PC-9 (cell line): ENCODE measurements at regions of chr1 and their contacts with region 1.

Region 1: GRCh38 chr1:6235296-6235677 is 477 bp downstream of the ICMT start:
- DNase-seq: no peak
- H3K4me3 ChIP-seq: peak overlapping the region; percentile 59
- H3K27ac ChIP-seq: no peak overlapping the region
- H3K4me1 ChIP-seq: peaks cover 8% of the 10 kb centered on the region
- H3K27me3 ChIP-seq: no peaks in the 10 kb centered on the region
- CTCF ChIP-seq: no peak

Region 2: DNA sequence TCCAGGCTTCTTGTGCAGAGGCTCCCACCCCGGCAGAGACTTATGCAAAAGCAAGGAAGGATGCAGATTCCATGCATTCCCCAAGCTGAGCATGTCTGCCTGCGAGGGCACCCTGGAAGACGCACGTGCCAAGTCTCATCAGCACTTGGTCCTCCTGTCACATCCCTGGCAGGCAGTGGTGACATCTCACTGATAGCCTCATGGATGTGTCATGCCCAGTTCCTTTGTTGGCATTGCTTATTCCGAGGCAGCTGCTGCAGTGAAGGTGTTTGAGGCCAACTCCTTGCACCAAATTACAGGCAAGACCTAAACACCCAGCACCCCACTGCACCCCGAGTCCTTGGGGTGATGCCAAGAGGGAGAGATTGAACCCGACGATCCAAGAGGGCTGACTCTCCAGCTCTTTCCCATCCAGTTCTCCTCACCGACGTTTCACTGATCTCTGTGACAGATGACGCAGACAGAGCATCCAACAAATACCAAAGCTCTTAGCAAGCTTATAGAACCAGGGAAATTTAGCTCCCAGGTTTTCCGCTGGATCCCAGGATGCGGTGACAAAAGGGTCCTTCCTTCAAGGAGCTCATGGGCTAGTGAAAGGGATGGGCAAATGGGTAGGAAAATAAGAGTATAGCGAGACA is 969.7 kb before region 1 on chr1:
- CTCF ChIA-PET with region 1: no interaction called
- POLR2A ChIA-PET with region 1: no interaction called
- intact Hi-C with region 1: no loop called
- DNase-seq: no peak
- H3K4me3 ChIP-seq: no peak overlapping the region
- H3K27ac ChIP-seq: no peak overlapping the region
- H3K4me1 ChIP-seq: no peaks in the 10 kb centered on the region
- H3K27me3 ChIP-seq: peaks cover 52% of the 10 kb centered on the region
- CTCF ChIP-seq: no peak

Region 3: GRCh38 chr1:5992026-5992813 is 243.1 kb before region 1 on chr1 and contains the start of gene NPHP4:
- CTCF ChIA-PET with region 1: no interaction called
- POLR2A ChIA-PET with region 1: no interaction called
- intact Hi-C with region 1: loop called (anchors 5 kb)
- DNase-seq: peak; percentile 95 to 98
- H3K4me3 ChIP-seq: peak within 1 kb of the TSS; percentile 85
- H3K27ac ChIP-seq: no peak within 1 kb of the TSS
- H3K4me1 ChIP-seq: 0 out of 2 replicates have a peak, but pooled peaks cover 4% of the 10 kb centered on the region
- H3K27me3 ChIP-seq: no peaks in the 10 kb centered on the region
- CTCF ChIP-seq: no peak
- total RNA-seq, gene NPHP4: 17.9 and 21.5 TPM in 2 replicates

Region 4: DNA sequence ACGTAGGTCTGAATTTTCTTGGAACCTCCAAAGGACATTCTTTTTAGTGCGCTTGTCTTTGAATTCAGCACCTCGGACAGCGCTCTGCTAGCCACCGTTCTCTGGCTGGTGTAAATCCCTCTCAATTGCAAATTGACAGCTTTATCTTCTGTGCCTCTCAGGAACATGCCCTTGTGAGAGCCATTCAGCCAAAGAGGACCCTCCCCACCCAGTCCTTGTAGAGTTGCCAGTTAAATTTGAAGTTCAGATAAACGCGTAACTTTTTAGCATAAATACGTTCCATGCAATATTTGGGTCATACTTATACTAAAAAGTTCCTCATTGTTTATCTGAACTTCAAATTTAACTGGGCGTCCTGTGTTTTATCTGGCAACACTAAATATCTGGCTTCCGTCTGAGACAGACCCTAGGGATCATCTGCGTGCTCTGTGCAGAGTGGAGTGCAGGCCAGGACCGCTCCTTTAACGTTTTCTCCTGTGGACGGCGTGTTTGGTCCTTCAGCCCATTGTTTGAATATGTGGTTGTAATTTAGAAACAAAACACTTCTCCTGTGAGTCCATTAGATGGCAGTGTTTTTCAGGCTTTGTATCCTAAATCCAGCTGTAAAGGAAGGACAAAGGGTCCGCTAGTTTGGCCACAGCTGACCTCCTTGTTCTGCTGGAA is 182.6 kb before region 1 on chr1:
- CTCF ChIA-PET with region 1: no interaction called
- POLR2A ChIA-PET with region 1: no interaction called
- intact Hi-C with region 1: no loop called
- DNase-seq: peak in 1 of 2 experiments; percentile 46
- H3K4me3 ChIP-seq: no peak overlapping the region
- H3K27ac ChIP-seq: no peak overlapping the region
- H3K4me1 ChIP-seq: no peaks in the 10 kb centered on the region; the same call in 1 of the 2 replicates
- H3K27me3 ChIP-seq: no peaks in the 10 kb centered on the region
- CTCF ChIP-seq: peak; percentile 71

Region 5: DNA sequence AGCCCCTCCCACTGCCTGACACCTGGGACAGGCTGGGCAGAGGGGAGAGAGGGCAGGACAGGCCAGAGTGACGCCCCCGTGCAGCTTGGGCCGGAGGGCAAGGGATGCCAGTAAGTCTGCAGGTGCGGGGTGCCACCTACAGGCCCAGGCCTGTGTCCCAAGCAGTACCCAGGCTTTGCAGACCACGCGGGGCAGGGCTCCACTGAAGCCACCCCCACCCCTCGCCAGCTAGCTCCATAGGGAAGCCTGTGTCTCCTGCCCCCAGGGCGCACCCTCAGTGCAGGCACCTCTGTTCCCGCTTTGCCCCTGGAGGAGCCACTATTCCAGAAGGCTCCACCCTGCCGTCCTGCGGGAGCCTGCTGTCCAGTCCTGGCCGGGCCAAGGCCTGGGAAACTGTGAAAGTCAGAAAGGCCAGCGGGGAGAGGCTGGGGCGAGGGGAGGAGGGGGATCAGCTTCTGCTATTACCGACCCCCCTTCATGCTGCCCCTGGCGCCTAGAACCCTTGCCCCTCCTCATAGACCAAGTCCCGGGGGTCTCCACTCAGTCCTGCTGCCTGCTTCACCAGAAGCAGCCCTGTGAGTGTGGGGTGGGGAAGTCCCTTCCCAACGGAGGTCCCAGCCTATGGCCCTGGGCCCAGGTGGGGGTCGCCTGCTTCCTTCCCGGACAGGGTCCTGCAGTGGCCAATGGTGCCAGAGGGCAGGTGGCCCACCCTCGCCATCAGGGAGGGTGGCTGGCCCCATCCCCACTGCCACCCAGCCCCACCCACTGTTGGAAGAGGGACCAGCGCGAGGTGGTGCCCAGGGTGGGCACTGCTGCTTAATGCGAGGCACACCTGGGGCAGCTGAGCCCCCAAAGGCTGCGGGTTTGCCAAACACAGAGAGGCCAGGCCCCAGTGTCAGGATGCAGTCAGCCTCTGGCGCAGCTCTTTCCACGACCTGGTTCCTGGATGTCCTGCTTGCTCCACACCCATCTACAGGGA is 135.2 kb before region 1 on chr1:
- CTCF ChIA-PET with region 1: interaction called, 11 read pairs
- POLR2A ChIA-PET with region 1: no interaction called
- intact Hi-C with region 1: no loop called
- DNase-seq: peak in 1 of 2 experiments; percentile 43
- H3K4me3 ChIP-seq: no peak overlapping the region
- H3K27ac ChIP-seq: no peak overlapping the region
- H3K4me1 ChIP-seq: no peaks in the 10 kb centered on the region
- H3K27me3 ChIP-seq: peaks cover 13% of the 10 kb centered on the region; the same call in 1 of the 2 replicates
- CTCF ChIP-seq: peak; percentile 34; the same call in 1 of the 2 replicates

Region 6: DNA sequence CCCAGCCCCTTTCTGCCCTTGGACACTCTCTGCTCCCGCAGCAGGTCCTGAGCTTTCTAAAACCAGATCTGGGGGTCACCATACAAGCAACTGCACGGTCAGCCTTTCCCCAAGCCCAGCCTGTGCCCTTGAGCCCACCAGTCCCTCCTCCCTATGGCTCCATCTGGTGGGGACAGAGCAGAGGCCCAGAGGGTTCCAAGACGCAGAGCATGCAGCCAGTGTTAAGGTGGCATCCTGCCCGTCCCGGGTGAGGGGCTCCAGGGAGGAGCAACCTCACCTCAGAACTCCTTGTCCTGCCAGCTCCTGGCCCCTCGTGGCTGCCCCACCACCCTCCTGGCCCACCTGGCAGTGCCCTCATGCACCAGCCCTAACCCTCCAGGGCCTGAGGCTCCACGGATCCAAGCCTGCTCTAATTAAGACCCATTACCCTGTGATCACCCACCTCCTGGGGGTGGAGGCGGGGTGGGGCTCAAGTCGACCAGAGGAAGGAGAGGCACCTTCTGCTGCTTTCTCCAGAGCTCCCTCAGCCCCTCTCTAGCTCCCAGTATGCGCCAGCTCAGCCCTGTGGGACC is 63.7 kb before region 1 on chr1:
- CTCF ChIA-PET with region 1: no interaction called
- POLR2A ChIA-PET with region 1: no interaction called
- intact Hi-C with region 1: no loop called
- DNase-seq: no peak
- H3K4me3 ChIP-seq: no peak overlapping the region
- H3K27ac ChIP-seq: no peak overlapping the region
- H3K4me1 ChIP-seq: peaks cover 6% of the 10 kb centered on the region; the same call in 1 of the 2 replicates
- H3K27me3 ChIP-seq: no peaks in the 10 kb centered on the region; the same call in 1 of the 2 replicates
- CTCF ChIP-seq: peak; percentile 39; the same call in 1 of the 2 replicates

Region 7: GRCh38 chr1:6185635-6186382 is 49.5 kb before region 1 on chr1:
- CTCF ChIA-PET with region 1: interaction called, 3 read pairs
- POLR2A ChIA-PET with region 1: no interaction called
- intact Hi-C with region 1: loop called (anchors 10 kb)
- DNase-seq: no peak
- H3K4me3 ChIP-seq: no peak overlapping the region
- H3K27ac ChIP-seq: no peak overlapping the region
- H3K4me1 ChIP-seq: 0 out of 2 replicates have a peak, but pooled peaks cover 14% of the 10 kb centered on the region
- H3K27me3 ChIP-seq: no peaks in the 10 kb centered on the region
- CTCF ChIP-seq: peak; percentile 65

Region 8: DNA sequence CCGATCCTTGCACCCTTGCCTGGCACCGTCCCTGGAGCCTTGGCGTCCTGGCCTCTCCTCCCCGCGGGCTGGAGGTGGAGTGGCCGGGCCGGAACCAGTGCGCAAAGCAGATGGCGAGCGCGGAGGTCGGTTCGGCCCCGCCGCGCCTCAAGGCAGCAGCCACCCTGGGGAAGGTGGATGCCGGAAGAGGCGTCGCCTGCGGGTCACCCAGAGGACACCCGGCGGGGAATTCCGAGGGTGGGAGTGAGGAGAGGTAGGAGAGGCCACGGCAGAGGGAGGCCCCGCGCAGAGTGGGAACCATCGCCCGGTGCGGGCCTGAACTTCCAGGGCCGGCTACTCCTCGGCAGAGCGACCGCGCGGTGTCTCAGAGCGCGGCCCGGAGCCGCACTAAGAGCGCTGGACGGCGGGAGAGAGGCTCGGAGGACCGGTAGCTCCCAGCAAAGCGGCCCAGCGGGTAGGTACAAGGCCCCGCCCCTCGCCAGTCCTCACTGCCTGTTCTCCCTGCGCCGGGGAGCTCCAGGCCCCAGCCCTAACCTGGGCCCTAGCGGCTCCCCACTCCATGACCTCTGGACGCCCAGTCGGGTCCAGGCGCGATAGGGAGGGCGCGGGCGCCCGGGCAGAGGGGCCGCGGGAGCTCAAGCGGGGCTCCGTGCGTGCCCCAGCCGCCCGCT is 29.3 kb before region 1 on chr1 and contains the start of gene RNF207:
- CTCF ChIA-PET with region 1: interaction called, 10 read pairs
- POLR2A ChIA-PET with region 1: no interaction called
- intact Hi-C with region 1: loop called (anchors 1 kb)
- DNase-seq: peak; percentile 73 to 86
- H3K4me3 ChIP-seq: peak within 1 kb of the TSS; percentile 94
- H3K27ac ChIP-seq: peak within 1 kb of the TSS; percentile 77
- H3K4me1 ChIP-seq: 0 out of 2 replicates have a peak, but pooled peaks cover 6% of the 10 kb centered on the region
- H3K27me3 ChIP-seq: no peaks in the 10 kb centered on the region
- CTCF ChIP-seq: no peak
- total RNA-seq, gene RNF207: 49.3 and 53.1 TPM in 2 replicates

Region 9: DNA sequence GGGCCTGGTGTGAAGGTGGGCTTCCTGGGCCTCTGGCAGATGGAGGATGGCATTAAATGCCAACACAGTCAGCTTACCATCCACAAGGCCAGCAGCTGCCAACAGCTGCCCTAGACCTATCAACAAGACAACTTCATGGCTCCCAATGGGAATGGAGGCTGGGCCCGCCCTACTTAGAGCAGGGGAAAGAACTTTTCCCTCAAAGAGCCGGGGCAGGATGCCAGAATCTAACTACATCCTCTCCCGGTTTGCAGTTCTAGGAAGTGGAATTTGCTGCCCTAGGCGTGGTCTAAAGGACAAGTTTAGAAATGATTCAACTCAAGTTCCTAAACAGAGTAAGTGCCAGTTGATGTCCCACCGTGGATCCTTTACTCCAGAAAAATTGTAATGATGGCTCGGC is 12.7 kb before region 1 on chr1:
- CTCF ChIA-PET with region 1: no interaction called
- POLR2A ChIA-PET with region 1: no interaction called
- intact Hi-C with region 1: loop called (anchors 1 kb)
- DNase-seq: peak in 1 of 2 experiments; percentile 63
- H3K4me3 ChIP-seq: no peak overlapping the region
- H3K27ac ChIP-seq: no peak overlapping the region; the same call in 1 of the 2 replicates
- H3K4me1 ChIP-seq: peaks cover 58% of the 10 kb centered on the region
- H3K27me3 ChIP-seq: no peaks in the 10 kb centered on the region
- CTCF ChIP-seq: no peak

Region 10: DNA sequence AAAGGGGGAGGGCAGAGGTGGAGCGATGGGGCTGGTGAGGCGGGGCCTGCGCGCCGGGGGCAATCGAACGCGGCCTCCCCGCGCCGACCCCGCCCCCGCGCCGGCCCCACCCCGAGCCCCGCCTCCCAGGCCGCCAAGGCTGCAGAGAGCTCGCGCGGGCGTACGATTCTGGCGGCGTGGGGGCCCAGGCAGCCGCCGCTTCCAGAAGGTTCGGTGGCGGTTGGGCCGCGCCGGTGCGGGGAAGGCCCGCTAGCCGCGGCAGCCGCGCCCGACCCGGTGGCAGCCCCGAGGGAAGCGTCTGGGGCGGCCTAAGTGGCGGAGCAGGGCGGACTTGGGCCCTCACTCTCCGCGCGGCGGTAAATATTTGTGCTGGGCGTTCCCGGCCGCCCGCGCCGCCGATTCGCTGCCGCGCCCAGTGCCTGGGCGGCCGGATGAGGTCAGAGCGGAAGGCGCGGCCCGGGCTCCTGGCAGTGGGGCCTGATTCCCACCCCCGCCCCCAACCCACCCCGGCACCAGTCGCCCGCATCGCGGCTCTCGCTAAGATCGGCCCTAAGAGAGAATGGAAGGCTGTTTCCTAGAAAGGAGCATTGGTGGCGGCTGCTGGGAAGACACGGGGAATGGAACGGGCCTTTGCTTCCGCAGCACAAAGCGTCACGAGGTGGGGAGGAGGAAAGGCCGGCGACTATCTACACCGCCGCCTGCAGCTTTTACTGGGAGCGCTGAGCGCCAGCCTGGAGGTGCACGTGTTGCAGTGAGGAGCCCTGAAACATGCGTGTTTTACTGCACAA is 158.3 kb after region 1 on chr1 and contains the start of gene ACOT7:
- CTCF ChIA-PET with region 1: interaction called, 14 read pairs
- POLR2A ChIA-PET with region 1: no interaction called
- intact Hi-C with region 1: no loop called
- DNase-seq: peak; percentile 69 to 86
- H3K4me3 ChIP-seq: peak within 1 kb of the TSS; percentile 60
- H3K27ac ChIP-seq: peak within 1 kb of the TSS; percentile 69
- H3K4me1 ChIP-seq: peaks cover 4% of the 10 kb centered on the region; the same call in 1 of the 2 replicates
- H3K27me3 ChIP-seq: no peaks in the 10 kb centered on the region
- CTCF ChIP-seq: no peak
- total RNA-seq, gene ACOT7: 62.2 and 70.2 TPM in 2 replicates